Left colon (tissue), 2 donors: ENCODE measurements at regions of chr11 and their contacts with region 1.

Region 1: DNA sequence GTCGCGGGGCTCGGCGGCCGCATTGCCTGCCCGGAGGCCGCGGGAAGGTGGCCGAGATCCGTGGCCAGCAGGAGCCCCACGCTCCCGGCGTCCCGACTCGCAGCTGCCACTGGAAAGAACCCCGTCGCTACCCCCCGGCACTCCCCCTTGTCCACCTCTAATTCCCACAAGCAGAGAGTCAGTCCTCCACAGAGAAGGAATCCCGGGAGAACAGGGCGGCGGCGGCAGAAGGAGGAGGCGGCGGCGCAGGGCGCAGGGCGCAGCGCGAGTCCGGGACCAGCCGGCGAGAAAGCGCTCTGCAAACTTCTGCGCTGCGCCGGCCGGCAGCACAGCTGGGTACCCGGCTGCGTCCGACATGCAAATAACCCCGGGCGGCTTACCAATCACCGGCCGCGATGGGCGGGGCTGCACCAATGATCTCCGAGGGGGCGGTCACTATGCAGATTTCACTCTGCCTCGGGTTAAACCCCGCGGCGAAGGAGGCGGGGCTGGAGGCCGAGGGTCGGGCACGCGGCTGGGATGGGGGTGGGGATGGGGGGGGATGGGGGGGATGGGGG is at the start of gene ABTB2:
- DNase-seq: peak; percentile 98 to 99
- ATAC-seq: peak; percentile 87
- total RNA-seq, gene ABTB2: 16.5 to 16.6 TPM

Region 2: DNA sequence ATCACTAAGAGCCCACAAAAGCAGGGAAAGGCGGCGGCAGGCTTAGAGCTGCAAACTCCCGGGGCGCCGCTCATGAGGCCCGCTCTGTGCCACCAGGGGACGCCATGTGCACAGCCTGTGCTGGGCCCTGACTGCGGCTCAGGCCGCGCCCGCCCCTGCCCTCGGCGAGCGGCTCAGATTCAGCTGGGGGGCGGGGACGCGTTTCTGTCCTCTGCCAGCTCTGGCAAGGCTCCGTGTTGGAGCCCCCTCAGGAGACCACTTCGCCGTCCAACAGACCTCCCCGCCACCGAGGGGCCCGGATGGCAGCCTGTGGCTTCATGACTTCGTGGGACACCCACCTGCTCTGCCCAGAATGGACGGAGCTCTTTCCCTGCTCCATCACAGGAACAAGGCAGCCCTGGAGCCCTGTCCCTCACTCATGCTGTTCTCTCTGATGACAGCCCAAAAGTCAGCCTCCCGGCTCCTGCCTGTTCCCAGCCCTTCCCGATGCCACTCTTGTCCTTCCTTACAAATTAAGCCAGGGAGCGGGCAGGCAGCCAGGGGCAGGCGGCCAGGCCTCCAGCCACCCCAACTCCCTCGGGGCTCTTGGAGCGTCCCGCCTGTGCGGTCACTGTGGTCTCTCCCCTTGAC is 183.3 kb before region 1 on chr11:
- intact Hi-C with region 1: loop called (anchors 2 to 5 kb)
- DNase-seq: peak; percentile 68 to 92
- ATAC-seq: peak; percentile 100